ENCODE measurements at regions of chr1 and their contacts with region 1.

Region 1: DNA sequence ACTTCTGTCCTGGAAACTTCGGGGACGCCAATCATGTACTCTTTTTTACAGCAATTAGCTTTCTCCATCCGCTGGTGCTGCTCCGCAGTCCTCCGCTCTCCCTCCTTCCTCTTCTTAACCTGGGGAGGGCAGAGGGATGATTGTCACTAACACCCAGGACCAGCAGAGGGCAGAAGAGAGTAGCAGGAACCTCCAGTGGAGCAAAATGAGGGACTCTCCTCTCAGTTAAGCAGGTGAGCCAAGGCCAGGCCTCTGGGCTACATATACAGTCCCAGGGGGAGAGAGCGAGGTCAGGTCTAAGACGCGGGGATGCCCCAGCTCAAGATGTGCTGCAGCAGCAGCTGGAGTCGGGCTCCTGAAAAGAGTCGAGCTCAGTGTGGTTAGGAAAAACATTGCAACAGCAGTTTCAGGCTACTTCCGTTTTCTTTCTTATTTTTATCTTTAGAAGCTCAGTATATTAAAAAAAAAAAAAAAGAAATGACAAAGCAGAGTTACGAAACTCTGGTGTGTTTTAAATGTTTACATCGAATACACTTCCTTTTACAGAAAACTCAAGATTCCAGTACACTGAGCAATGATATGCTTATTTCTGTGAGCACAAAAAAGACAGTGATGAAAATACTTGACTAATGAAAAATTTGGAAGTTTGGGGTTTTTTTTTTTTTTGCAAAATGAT is 25.7 kb upstream of the NLRP3 start:
- DNase-seq: peak; percentile 75
- ATAC-seq: peak; percentile 95
- H3K4me3 ChIP-seq: peak overlapping the region; percentile 23; the same call in 1 of the 2 replicates
- H3K27ac ChIP-seq: peak overlapping the region; percentile 87
- H3K4me1 ChIP-seq: peaks cover 2% of the 10 kb centered on the region; the same call in 1 of the 2 replicates
- H3K27me3 ChIP-seq: no peaks in the 10 kb centered on the region
- CTCF ChIP-seq: peak; percentile 82
- POLR2A ChIP-seq: no peak
- RAD21 ChIP-seq: peak; percentile 63

Region 2: GRCh38 chr1:247448107-247448791 is 58.0 kb after region 1 on chr1:
- CTCF ChIA-PET with region 1: no interaction called
- POLR2A ChIA-PET with region 1: interaction called, 4 read pairs
- dilution Hi-C with region 1: no loop called
- in situ Hi-C with region 1: no loop called
- intact Hi-C with region 1: loop called (anchors 2 kb)
- DNase-seq: peak; percentile 31
- ATAC-seq: peak; percentile 96
- H3K4me3 ChIP-seq: peak overlapping the region; percentile 58
- H3K27ac ChIP-seq: peak overlapping the region; percentile 73
- H3K4me1 ChIP-seq: no peaks in the 10 kb centered on the region
- H3K27me3 ChIP-seq: no peaks in the 10 kb centered on the region
- CTCF ChIP-seq: no peak
- POLR2A ChIP-seq: no peak
- RAD21 ChIP-seq: no peak

Region 3: DNA sequence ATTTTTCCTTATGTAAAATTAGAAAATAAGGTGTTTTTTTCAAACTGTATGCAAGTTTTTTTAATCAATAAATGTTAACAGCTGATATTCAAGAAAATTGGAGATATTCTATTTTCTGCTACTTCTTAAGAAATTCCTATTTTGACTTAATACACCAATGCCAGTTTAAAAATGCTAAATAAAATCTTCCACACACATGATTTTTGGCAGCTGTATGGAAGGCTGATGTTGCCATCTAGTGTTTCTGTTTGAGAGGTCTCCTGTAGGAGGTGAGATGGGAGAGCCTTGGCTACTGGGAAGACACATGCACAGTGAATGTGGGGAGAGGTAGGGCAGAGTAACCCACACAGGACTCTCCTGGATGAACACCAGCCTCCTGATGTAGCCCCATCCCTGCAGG is 96.8 kb after region 1 on chr1:
- CTCF ChIA-PET with region 1: no interaction called
- POLR2A ChIA-PET with region 1: no interaction called
- dilution Hi-C with region 1: no loop called
- in situ Hi-C with region 1: no loop called
- intact Hi-C with region 1: loop called (anchors 1 kb)
- DNase-seq: peak; percentile 34
- ATAC-seq: peak; percentile 81
- H3K4me3 ChIP-seq: no peak overlapping the region
- H3K27ac ChIP-seq: no peak overlapping the region
- H3K4me1 ChIP-seq: no peaks in the 10 kb centered on the region
- H3K27me3 ChIP-seq: no peaks in the 10 kb centered on the region
- CTCF ChIP-seq: peak; percentile 47
- POLR2A ChIP-seq: no peak
- RAD21 ChIP-seq: peak; percentile 47

Region 4: GRCh38 chr1:247576495-247576894 is 186.2 kb after region 1 on chr1:
- CTCF ChIA-PET with region 1: interaction called, 3 read pairs
- POLR2A ChIA-PET with region 1: no interaction called
- dilution Hi-C with region 1: no loop called
- in situ Hi-C with region 1: no loop called
- intact Hi-C with region 1: loop called (anchors 1 kb)
- DNase-seq: no peak
- ATAC-seq: no peak
- H3K4me3 ChIP-seq: no peak overlapping the region
- H3K27ac ChIP-seq: no peak overlapping the region
- H3K4me1 ChIP-seq: no peaks in the 10 kb centered on the region
- H3K27me3 ChIP-seq: no peaks in the 10 kb centered on the region
- CTCF ChIP-seq: 0 out of 2 replicates have a peak, but pooled peaks have one; percentile 13
- POLR2A ChIP-seq: no peak
- RAD21 ChIP-seq: no peak

Region 5: DNA sequence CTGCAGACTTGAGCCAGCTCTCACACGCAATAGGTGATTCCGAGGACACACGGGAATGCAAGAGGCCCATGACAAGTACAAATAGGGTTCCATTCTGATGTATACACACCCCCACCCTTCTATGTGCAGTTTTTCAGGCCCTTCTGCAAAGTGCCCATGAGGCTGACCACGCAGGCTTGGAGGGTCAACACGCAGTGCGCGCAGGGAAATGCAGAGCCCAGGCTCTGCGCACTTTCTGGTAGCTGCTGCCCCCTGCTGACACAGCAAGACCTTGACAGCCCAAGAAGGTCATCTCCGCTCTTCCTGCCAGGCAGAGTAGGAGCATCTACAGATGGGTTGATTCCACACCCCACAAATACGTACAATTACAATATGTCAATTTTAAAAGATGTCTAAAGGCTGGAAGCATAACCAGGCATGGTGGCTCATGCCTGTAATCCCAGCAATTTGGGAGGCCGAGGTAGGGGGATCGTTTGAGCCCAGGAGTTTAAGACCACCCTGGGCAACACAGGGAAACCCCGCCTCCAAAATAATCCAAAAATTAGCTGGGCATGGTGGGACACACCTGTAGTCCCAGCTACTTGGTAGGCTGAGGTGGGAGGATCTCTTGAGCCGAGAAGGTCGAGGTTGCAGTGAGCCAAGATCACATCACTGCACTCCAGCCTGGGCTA is 1416.9 kb after region 1 on chr1:
- CTCF ChIA-PET with region 1: no interaction called
- POLR2A ChIA-PET with region 1: no interaction called
- dilution Hi-C with region 1: no loop called
- in situ Hi-C with region 1: no loop called
- intact Hi-C with region 1: loop called (anchors 5 kb)
- DNase-seq: peak; percentile 39
- ATAC-seq: peak; percentile 76
- H3K4me3 ChIP-seq: no peak overlapping the region
- H3K27ac ChIP-seq: no peak overlapping the region
- H3K4me1 ChIP-seq: peaks cover 3% of the 10 kb centered on the region; the same call in 1 of the 2 replicates
- H3K27me3 ChIP-seq: no peaks in the 10 kb centered on the region; the same call in 1 of the 2 replicates
- CTCF ChIP-seq: peak; percentile 64
- POLR2A ChIP-seq: no peak
- RAD21 ChIP-seq: peak; percentile 69

Measured in IMR-90 (cell line).